ENCODE measurements at regions of chr17 and their contacts with region 1.

Region 1: GRCh38 chr17:6677158-6677831 is 25.7 kb downstream of the C17orf100 start:
- DNase-seq: no peak
- H3K4me3 ChIP-seq: no peak overlapping the region
- H3K27ac ChIP-seq: no peak overlapping the region
- H3K4me1 ChIP-seq: no peaks in the 10 kb centered on the region
- H3K27me3 ChIP-seq: no peaks in the 10 kb centered on the region
- CTCF ChIP-seq: no peak
- EP300 ChIP-seq: no peak
- POLR2A ChIP-seq: no peak

Region 2: DNA sequence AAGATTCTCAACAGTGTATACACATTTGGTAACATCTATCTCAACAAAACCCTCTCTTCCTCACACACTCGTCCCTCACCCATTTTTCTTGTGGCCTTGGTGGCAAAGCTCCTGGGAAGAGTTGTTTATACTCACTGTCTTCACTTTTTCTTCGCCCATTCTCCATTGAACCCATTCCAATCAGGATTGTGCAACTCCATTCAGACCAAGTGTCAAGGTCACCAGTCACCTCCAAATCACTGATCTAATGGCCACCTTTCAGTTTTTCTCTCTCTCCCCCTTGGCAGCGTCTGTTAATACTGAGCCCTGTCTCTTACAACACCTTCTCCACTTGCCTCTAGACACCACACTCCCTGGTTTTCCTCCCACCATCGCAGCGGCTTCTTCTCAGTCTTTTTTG is 44.4 kb after region 1 on chr17:
- intact Hi-C with region 1: no loop called
- DNase-seq: no peak
- H3K4me3 ChIP-seq: no peak overlapping the region
- H3K27ac ChIP-seq: no peak overlapping the region
- H3K4me1 ChIP-seq: no peaks in the 10 kb centered on the region
- H3K27me3 ChIP-seq: no peaks in the 10 kb centered on the region
- CTCF ChIP-seq: no peak
- EP300 ChIP-seq: no peak
- POLR2A ChIP-seq: no peak

Region 3: DNA sequence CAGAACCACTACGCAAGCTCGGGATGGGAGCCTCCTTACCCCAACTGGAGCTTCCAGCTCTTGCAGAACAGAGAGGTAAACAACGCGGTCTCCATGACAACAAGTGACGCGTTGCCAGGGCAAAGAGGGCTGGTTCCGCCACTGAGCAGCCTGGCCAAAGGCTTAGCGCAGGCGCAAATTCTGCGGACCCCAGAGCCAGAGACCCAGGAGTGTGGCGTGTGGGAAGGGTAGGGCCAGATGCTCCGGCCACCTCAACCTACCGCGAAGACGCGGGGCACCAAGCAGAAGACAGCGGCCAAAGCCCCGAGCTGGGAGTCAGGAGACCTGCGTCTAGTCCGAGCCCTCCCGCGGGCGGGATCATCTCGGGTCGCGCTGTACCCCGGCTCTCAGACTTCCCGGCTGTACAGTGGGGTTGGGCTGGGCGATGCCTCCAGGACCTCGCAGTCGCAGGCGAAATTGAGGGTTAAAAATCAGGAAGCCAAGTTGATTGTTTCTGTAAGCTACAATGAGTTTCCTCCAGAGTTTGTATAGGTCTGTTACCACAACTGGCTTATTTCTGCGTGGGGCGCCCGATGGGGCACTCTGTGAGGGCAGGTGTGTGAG is 154.5 kb after region 1 on chr17 and contains the start of gene TEKT1:
- intact Hi-C with region 1: loop called in 1 of 4 experiments (anchors 10 kb)
- DNase-seq: peak; percentile 11 to 53 (median 32)
- H3K4me3 ChIP-seq: no peak within 1 kb of the TSS
- H3K27ac ChIP-seq: no peak within 1 kb of the TSS
- H3K4me1 ChIP-seq: no peaks in the 10 kb centered on the region
- H3K27me3 ChIP-seq: no peaks in the 10 kb centered on the region
- CTCF ChIP-seq: no peak
- EP300 ChIP-seq: no peak
- POLR2A ChIP-seq: no peak
- total RNA-seq, gene TEKT1: 0.94 to 19.3 (median 2.1) TPM in 5 of 7 donors, not detected in the others